ENCODE measurements at regions of chr17 and their contacts with region 1.

Region 1: GRCh38 chr17:73519714-73520368 is 124.4 kb downstream of the SDK2 start:
- DNase-seq: no peak
- ATAC-seq: no peak
- H3K4me3 ChIP-seq: no peak overlapping the region
- H3K27ac ChIP-seq: no peak overlapping the region
- H3K4me1 ChIP-seq: no peaks in the 10 kb centered on the region
- H3K27me3 ChIP-seq: no peaks in the 10 kb centered on the region

Region 2: DNA sequence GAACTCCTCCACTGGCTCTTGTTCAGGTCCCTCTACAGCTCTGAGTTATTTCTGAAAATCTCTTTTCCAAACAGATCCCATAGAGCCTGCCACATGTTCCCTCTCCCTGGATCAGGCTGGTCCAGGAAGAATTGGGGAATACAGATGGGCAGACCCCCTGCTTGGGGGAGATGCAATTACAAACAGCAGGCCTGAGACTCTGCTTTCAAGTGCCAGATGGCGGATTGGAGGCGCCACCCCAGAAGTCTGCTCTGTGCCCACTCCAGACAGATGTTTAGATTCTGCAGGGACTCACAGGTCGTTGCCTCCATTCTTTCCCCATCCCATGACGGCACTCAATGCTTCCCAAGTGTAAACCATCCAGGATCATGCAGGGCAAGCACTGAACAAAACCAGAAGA is 743.9 kb before region 1 on chr17:
- intact Hi-C with region 1: no loop called
- DNase-seq: no peak
- ATAC-seq: no peak
- H3K4me3 ChIP-seq: no peak overlapping the region
- H3K27ac ChIP-seq: no peak overlapping the region
- H3K4me1 ChIP-seq: no peaks in the 10 kb centered on the region
- H3K27me3 ChIP-seq: no peaks in the 10 kb centered on the region

Region 3: GRCh38 chr17:73485130-73485529 is 34.7 kb before region 1 on chr17:
- intact Hi-C with region 1: loop called in 1 of 2 experiments (anchors 2 kb)
- DNase-seq: no peak
- ATAC-seq: no peak
- H3K4me3 ChIP-seq: no peak overlapping the region
- H3K27ac ChIP-seq: no peak overlapping the region
- H3K4me1 ChIP-seq: no peaks in the 10 kb centered on the region
- H3K27me3 ChIP-seq: no peaks in the 10 kb centered on the region